Activated CD8-positive, alpha-beta T cell treated with anti-CD3 and anti-CD28 coated beads, Interleukin-2, amount 10 ng/mL, durations not matched to agents 7 days and 5 days (primary cell): ENCODE measurements at regions of chr20 and their contacts with region 1.

Region 1: DNA sequence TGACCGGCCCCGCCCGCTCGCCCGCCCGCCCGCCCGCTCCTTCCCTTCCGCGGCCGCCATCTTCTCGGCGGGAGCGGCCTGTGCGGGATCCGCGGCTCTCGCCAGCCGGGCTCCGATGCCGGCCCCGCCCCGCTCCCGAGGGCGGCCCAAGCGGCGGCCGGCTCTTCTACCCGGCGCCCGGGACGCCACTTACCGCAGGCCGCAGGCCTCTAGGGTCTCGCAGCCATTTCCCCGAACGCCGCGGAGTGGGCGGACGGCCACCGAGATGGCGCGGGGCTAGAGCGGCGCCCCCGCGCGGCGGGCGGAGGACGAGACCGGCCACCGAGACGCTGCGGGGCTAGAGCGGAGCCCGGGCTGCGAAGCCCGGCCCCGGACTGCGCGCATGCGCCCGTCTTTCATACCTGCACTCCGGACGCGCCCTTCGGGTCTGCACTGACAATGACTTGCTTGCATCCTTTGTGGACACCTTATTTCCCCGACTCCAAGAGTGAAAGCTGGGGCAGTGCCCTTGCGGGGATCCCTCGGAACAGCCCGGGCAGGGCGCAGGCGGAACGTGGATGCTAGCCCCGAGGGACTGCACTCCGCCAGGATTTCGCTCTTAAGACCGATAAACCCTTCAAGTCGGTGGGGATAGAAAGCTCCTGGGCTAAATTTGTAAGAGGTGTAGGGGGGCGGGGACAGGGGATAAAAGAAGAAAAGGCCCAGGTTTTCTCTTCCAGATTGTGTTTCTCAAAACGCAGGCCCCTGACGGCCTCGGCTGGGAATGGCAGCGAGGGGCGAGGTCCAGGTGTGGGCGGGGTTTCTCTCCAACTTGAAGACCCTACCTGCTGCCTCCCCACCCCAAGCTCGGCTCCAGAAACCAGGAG is at the start of gene DIDO1:
- DNase-seq: peak; percentile 89
- ATAC-seq: peak; percentile 76
- H3K4me3 Mint-ChIP-seq: peak within 1 kb of the TSS; percentile 92
- H3K27ac Mint-ChIP-seq: peak within 1 kb of the TSS; percentile 96
- H3K4me1 Mint-ChIP-seq: peaks cover 72% of the 10 kb centered on the region
- H3K27me3 Mint-ChIP-seq: no peaks in the 10 kb centered on the region
- total RNA-seq, gene DIDO1: 69.6 to 74.0 TPM

Region 2: GRCh38 chr20:62861726-62862336 is 64.6 kb before region 1 on chr20 and contains the start of gene TCFL5:
- CTCF ChIA-PET with region 1: no interaction called
- POLR2A ChIA-PET with region 1: no interaction called
- DNase-seq: peak; percentile 92
- ATAC-seq: peak; percentile 88
- H3K4me3 Mint-ChIP-seq: peak within 1 kb of the TSS; percentile 64
- H3K27ac Mint-ChIP-seq: no peak within 1 kb of the TSS
- H3K4me1 Mint-ChIP-seq: peaks cover 23% of the 10 kb centered on the region
- H3K27me3 Mint-ChIP-seq: peaks cover 4% of the 10 kb centered on the region
- total RNA-seq, gene TCFL5: 7.9 to 9.6 TPM

Region 3: DNA sequence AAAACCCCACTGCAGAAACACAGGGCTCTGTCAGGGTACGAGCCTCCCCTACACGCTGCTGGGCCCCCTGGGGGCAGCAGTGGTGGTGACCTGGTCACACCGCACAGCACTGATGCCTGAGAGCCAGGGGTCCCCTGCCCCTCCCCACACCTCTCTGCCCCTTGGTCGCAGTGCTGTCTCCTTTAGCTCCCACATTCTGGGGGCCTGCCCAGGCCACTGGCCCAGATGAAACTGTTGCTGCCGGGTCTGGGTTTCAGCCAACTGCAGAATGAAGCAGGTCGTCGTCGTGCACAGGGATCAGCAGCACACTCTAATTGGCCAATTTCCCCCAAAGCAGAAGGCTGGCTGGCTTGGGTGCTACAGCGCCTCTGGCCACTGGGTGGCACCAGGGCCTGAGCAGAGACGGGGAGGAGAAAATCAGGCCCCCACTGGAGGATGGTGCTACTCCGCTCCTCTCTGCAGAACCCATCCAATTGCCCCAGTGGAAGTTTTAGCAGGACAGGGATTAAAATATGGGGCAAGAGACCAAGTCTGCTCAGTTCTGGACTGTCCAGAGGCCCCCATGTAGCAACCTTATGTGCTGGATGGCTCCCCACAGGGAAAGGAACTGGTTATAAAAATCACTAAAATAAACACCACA is 26.3 kb before region 1 on chr20:
- CTCF ChIA-PET with region 1: interaction called, 182 read pairs
- POLR2A ChIA-PET with region 1: interaction called, 5 read pairs
- DNase-seq: peak; percentile 84
- ATAC-seq: peak; percentile 95
- H3K4me3 Mint-ChIP-seq: no peak overlapping the region
- H3K27ac Mint-ChIP-seq: peak overlapping the region; percentile 80
- H3K4me1 Mint-ChIP-seq: peaks cover 51% of the 10 kb centered on the region
- H3K27me3 Mint-ChIP-seq: no peaks in the 10 kb centered on the region

Region 4: DNA sequence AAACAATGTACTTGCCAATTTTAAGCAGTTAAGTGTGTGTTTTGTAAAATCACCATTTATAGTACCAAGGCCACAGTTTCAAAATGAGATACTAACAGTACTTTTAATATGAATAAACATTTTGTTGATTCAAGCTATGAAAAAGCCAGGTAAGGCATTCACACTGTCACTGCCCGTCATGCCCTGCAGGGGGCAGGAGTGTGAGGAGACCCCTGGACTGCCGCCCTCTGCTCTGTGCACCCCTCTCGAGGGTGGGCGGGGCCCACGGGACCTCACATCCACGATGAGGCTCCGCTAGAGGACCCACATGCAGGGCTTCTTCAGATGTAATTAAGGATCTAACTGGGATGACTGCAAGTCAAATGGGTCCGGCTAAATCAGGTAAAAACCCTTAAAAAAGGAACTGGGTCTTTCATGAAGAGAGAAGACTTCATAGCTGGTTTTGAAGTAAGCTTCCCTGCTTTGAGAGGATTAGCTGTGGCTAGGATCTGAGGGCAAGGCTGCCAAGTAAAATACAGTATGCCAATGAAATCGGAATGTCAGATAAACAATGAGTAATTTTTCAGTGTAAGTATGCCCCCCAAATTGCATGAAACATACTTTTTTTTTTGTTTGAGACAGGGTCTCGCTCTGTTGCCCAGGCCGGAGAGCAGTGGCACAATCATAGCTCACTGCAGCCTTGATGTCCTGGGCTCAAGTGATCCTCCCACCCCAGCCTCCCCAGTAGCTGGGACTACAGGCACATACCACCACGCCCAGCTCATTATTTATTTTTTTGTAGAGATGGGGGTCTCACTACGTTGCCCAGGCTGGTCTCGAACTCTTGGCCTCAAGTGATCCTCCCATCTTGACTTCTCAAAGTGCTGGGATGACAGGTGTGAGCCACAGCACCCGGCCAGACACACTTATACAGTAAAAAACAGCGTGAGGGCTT is 18.8 kb before region 1 on chr20:
- CTCF ChIA-PET with region 1: interaction called, 182 read pairs
- POLR2A ChIA-PET with region 1: interaction called, 5 read pairs
- DNase-seq: peak; percentile 52
- ATAC-seq: peak; percentile 74
- H3K4me3 Mint-ChIP-seq: no peak overlapping the region
- H3K27ac Mint-ChIP-seq: no peak overlapping the region
- H3K4me1 Mint-ChIP-seq: peaks cover 41% of the 10 kb centered on the region
- H3K27me3 Mint-ChIP-seq: no peaks in the 10 kb centered on the region

Region 5: GRCh38 chr20:62914970-62915457 is 11.5 kb before region 1 on chr20:
- CTCF ChIA-PET with region 1: interaction called, 105 read pairs
- POLR2A ChIA-PET with region 1: interaction called, 11 read pairs
- DNase-seq: peak; percentile 65
- ATAC-seq: peak; percentile 42
- H3K4me3 Mint-ChIP-seq: peak overlapping the region; percentile 44
- H3K27ac Mint-ChIP-seq: peak overlapping the region; percentile 70
- H3K4me1 Mint-ChIP-seq: peaks cover 70% of the 10 kb centered on the region
- H3K27me3 Mint-ChIP-seq: no peaks in the 10 kb centered on the region

Region 6: GRCh38 chr20:62937366-62938104 is 11.1 kb after region 1 on chr20:
- CTCF ChIA-PET with region 1: interaction called, 100 read pairs
- POLR2A ChIA-PET with region 1: interaction called, 82 read pairs
- DNase-seq: peak; percentile 97
- ATAC-seq: peak; percentile 90
- H3K4me3 Mint-ChIP-seq: no peak overlapping the region
- H3K27ac Mint-ChIP-seq: peak overlapping the region; percentile 95
- H3K4me1 Mint-ChIP-seq: peaks cover 37% of the 10 kb centered on the region
- H3K27me3 Mint-ChIP-seq: no peaks in the 10 kb centered on the region